ENCODE measurements at regions of chr10 and their contacts with region 1.

Region 1: GRCh38 chr10:110671788-110672579 is 27.8 kb downstream of the RBM20 start:
- DNase-seq: peak; percentile 66 to 76
- H3K4me3 ChIP-seq: peak overlapping the region; percentile 51 to 62
- H3K27ac ChIP-seq: peak overlapping the region; percentile 34 to 55
- H3K4me1 ChIP-seq: peaks cover 0 to 17% (median 6%) of the 10 kb centered on the region in 4 donors
- H3K27me3 ChIP-seq: no peaks in the 10 kb centered on the region
- CTCF ChIP-seq: peak; percentile 92 to 97

Region 2: GRCh38 chr10:110395725-110396651 is 276.0 kb before region 1 on chr10:
- intact Hi-C with region 1: no loop called
- DNase-seq: no peak
- H3K4me3 ChIP-seq: no peak overlapping the region
- H3K27ac ChIP-seq: no peak overlapping the region
- H3K4me1 ChIP-seq: peaks cover 0 to 18% (median 6%) of the 10 kb centered on the region in 4 donors
- H3K27me3 ChIP-seq: peaks cover 0 to 23% of the 10 kb centered on the region in 2 donors
- CTCF ChIP-seq: no peak

Region 3: DNA sequence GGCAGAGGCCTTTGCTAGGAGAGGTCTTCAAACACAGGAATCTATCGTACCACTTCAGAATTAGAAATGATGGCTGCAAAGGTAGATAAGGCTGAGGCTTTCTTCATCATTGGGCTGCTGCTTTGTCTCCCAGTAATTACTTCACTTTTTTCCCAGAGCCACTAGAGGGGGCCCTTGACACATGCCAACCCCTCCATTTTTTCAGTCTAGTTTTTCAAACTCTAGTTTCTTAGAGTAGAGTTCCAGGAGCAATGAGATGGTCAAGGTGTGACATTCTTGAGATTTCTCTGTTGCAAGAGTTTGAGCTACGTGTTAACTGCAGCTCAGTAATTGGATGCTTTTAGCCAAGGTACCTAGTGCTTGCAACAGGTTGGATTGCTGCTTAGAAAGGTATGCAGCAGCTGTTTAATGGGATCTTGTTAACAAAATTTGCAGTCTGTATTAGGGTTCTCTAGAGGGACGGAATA is 61.6 kb before region 1 on chr10:
- intact Hi-C with region 1: loop called (anchors 5 kb)
- DNase-seq: no peak
- H3K4me3 ChIP-seq: no peak overlapping the region
- H3K27ac ChIP-seq: no peak overlapping the region
- H3K4me1 ChIP-seq: no peaks in the 10 kb centered on the region
- H3K27me3 ChIP-seq: no peaks in the 10 kb centered on the region
- CTCF ChIP-seq: peak; percentile 69 to 83

Region 4: GRCh38 chr10:111455776-111456426 is 783.9 kb after region 1 on chr10:
- intact Hi-C with region 1: no loop called
- DNase-seq: peak in 1 of 2 donors; percentile 24
- H3K4me3 ChIP-seq: no peak overlapping the region
- H3K27ac ChIP-seq: no peak overlapping the region
- H3K4me1 ChIP-seq: no peaks in the 10 kb centered on the region
- H3K27me3 ChIP-seq: no peaks in the 10 kb centered on the region
- CTCF ChIP-seq: no peak